ENCODE measurements at regions of chr14 and their contacts with region 1.

Region 1: GRCh38 chr14:96852823-96853422 is 55.7 kb downstream of the VRK1 start:
- DNase-seq: peak; percentile 34
- H3K4me3 ChIP-seq: no peak overlapping the region
- H3K27ac ChIP-seq: no peak overlapping the region
- H3K27me3 ChIP-seq: no peaks in the 10 kb centered on the region
- CTCF ChIP-seq: peak; percentile 79

Region 2: GRCh38 chr14:96567289-96567899 is 285.5 kb before region 1 on chr14:
- CTCF ChIA-PET with region 1: interaction called, 39 read pairs
- POLR2A ChIA-PET with region 1: no interaction called
- DNase-seq: peak; percentile 2
- H3K4me3 ChIP-seq: no peak overlapping the region
- H3K27ac ChIP-seq: no peak overlapping the region
- H3K27me3 ChIP-seq: no peaks in the 10 kb centered on the region
- CTCF ChIP-seq: peak; percentile 66

Region 3: DNA sequence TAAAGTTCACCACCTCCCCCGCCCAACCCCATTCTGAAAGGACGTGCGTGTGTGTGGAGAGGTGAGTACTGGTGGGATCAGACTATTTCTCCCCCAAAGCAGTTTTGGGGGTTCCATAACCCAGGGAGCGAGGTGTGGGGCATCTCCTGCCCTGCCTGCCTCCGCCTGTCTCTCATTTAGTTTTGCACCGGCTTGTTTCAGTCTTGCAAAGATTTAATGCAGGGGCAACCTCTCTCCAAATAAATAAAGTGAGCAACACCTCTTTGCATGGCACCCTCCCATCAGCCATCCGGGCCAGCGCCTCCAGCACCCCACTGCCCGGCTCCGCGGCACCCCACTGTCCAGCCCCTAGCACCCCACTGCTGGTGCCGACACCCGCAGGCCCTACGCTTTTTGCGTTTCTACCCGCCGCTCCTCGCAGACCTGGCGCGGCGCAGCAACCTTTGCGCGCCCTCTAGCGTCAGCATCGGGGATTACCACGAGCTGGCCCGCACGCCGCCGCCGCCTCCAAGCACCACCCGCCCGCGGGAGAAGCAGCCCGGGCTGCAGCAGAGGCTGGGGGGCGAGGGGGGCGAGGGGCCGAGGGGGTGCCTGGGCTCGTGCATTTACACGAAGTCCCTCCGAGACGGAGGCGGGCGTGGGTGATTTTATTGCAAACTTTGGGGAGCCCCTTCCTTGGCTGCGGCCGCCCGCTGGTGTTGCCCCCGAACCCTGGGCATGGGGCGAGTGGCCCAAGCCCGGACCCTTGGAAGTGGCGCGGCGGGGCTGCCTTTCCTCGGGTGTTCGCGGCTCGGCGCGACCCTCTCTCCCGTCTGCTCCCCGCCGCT is 111.6 kb before region 1 on chr14:
- CTCF ChIA-PET with region 1: interaction called, 31 read pairs
- POLR2A ChIA-PET with region 1: no interaction called
- DNase-seq: no peak
- H3K4me3 ChIP-seq: peak overlapping the region; percentile 66
- H3K27ac ChIP-seq: no peak overlapping the region
- H3K27me3 ChIP-seq: peaks cover 35% of the 10 kb centered on the region
- CTCF ChIP-seq: peak; percentile 82

Region 4: DNA sequence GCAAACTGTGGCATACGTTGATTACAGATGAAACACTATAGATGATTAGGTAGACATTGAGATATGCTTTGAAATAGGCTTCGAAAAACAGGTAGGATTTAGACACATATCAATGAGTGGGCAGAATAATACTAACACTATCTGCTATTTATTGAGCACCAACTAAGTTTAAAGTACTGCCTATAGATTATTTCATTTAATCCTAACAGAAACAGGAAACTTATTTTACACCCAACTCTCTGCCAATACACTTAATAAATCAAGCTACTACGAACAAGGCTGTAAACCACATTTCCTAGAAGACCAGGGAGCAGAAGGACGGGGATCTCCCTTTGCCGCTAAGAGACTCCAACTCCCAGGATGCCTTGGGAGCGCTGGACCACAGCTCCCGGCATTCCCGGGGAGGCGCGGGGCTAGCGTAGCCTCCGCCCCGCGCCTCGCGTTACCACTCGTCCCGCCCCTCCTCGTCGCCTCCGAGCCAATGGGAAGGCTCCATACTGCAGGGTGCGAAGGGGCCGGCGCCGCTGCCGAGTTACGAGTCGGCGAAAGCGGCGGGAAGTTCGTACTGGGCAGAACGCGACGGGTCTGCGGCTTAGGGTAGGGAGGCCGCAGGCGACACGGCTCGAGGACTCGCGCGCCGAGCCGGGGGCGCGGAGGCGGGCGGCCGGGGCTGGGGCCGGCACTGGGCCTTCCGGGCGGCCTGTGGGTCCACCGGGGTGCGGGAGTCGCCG is 55.9 kb before region 1 on chr14 and contains the start of gene VRK1:
- CTCF ChIA-PET with region 1: interaction called, 38 read pairs
- POLR2A ChIA-PET with region 1: no interaction called
- DNase-seq: peak; percentile 85
- H3K4me3 ChIP-seq: peak within 1 kb of the TSS; percentile 75
- H3K27ac ChIP-seq: no peak within 1 kb of the TSS
- H3K27me3 ChIP-seq: peaks cover 4% of the 10 kb centered on the region
- CTCF ChIP-seq: no peak
- polyA plus RNA-seq, gene VRK1: 5.5 and 8.3 TPM in 2 replicates

Region 5: DNA sequence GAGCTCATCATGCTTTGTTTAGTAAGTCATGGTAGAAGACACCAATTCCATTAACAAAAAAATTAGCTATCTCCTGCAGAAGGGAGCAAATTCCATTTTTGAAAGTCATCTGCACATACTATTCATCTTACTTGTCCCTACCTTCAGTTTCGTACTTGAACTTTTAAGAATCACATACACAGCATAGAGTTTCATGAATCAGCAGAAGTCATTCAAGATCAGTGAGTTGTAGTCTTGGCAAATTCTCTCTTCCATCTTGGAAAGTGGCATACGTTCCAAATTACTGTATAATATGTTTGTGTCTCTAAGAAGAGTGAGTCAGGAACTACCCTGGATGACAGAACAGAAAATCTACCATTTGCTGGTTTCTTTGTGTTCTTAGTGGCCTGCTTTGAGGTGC is 41.7 kb before region 1 on chr14:
- CTCF ChIA-PET with region 1: interaction called, 15 read pairs
- POLR2A ChIA-PET with region 1: no interaction called
- DNase-seq: peak; percentile 18
- H3K4me3 ChIP-seq: no peak overlapping the region
- H3K27ac ChIP-seq: no peak overlapping the region
- H3K27me3 ChIP-seq: no peaks in the 10 kb centered on the region
- CTCF ChIP-seq: no peak

Region 6: DNA sequence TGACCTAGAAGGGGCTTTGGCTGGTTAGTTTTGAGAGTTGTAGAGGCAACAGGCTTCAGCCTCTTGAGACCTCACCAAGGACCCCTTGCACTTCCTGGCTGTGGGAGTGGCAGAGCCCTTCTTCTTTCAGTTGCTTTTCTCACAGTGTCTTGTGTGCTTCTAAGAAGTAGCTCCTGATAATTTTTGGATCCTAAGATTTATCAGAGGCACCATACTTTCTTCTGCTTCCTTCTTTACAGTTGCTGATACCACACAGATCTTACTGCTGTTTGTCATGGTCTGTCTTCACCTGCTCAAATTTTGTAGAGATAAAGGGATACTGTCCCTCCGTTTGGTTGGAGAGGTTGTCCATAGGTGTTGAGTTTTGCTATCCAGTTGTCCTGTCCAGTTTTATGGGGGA is 22.0 kb before region 1 on chr14:
- CTCF ChIA-PET with region 1: interaction called, 38 read pairs
- POLR2A ChIA-PET with region 1: no interaction called
- DNase-seq: no peak
- H3K4me3 ChIP-seq: no peak overlapping the region
- H3K27ac ChIP-seq: no peak overlapping the region
- H3K27me3 ChIP-seq: no peaks in the 10 kb centered on the region
- CTCF ChIP-seq: no peak

Region 7: GRCh38 chr14:96881713-96882112 is 28.8 kb after region 1 on chr14:
- CTCF ChIA-PET with region 1: no interaction called
- POLR2A ChIA-PET with region 1: no interaction called
- DNase-seq: no peak
- H3K4me3 ChIP-seq: no peak overlapping the region
- H3K27ac ChIP-seq: no peak overlapping the region
- H3K27me3 ChIP-seq: no peaks in the 10 kb centered on the region
- CTCF ChIP-seq: no peak

Region 8: DNA sequence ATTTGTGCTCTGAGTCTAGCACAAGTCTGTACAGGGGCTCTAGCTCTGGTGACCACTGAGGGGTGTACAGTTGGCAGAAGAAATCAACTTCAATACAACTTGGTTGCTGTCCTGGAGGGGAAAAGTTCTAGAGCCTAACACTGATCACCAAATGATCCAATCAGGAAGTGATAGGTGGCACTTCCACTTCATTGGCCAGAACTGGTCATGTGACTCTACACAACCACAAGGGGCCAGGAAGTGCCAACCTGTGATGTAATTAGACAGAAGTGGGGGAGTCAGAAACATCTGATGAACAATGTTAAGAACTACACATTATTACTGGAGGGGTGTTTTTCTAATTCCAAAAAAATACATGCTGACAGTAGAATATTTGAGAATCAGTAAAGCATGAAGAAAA is 345.9 kb after region 1 on chr14:
- CTCF ChIA-PET with region 1: no interaction called
- POLR2A ChIA-PET with region 1: no interaction called
- DNase-seq: no peak
- H3K4me3 ChIP-seq: no peak overlapping the region
- H3K27ac ChIP-seq: no peak overlapping the region
- H3K27me3 ChIP-seq: no peaks in the 10 kb centered on the region
- CTCF ChIP-seq: no peak

Measured in AG04450 (cell line).